Gastrocnemius medialis (tissue), 4 donors: ENCODE measurements at regions of chr20 and their contacts with region 1.

Region 1: GRCh38 chr20:10673988-10674711 is at the start of gene JAG1:
- DNase-seq: peak; percentile 91 to 93
- ATAC-seq: peak; percentile 79 to 80
- H3K4me3 ChIP-seq: peak within 1 kb of the TSS; percentile 62 to 98 (median 82)
- H3K27ac ChIP-seq: peak within 1 kb of the TSS; percentile 86 to 95 (median 88)
- H3K4me1 ChIP-seq: peaks cover 0 to 18% of the 10 kb centered on the region in 2 donors
- H3K27me3 ChIP-seq: no peaks in the 10 kb centered on the region
- CTCF ChIP-seq: no peak
- POLR2A ChIP-seq: peak in 1 of 2 donors; percentile 89
- total RNA-seq, gene JAG1: 10.3 to 19.6 (median 13.2) TPM

Region 2: DNA sequence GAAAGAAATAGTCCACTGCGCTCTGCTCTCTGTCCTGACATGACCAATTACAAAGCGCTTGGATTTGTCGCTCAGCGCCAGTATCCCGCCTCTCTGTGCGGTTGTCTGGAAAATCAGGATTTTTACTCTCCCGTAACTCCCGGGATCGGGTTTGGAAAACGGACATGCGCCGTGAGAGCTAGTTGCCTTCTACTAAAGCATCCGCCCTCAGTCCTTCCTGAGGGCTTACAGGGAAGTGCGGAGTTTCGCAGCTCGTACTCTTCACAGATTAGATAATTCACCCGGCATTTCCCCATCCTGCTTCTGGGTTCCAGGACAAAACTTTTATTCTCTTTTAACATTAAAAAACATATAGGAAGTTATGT is 239.7 kb before region 1 on chr20:
- in situ Hi-C with region 1: no loop called
- intact Hi-C with region 1: loop called (anchors 1 kb)
- DNase-seq: peak; percentile 94 to 95
- ATAC-seq: peak; percentile 87 to 94
- H3K4me3 ChIP-seq: peak overlapping the region; percentile 70 to 87 (median 80)
- H3K27ac ChIP-seq: peak overlapping the region; percentile 93 to 95 (median 93)
- H3K4me1 ChIP-seq: peaks cover 34 to 39% of the 10 kb centered on the region in 2 donors
- H3K27me3 ChIP-seq: no peaks in the 10 kb centered on the region
- CTCF ChIP-seq: no peak
- POLR2A ChIP-seq: peak; percentile 91 to 92

Region 3: DNA sequence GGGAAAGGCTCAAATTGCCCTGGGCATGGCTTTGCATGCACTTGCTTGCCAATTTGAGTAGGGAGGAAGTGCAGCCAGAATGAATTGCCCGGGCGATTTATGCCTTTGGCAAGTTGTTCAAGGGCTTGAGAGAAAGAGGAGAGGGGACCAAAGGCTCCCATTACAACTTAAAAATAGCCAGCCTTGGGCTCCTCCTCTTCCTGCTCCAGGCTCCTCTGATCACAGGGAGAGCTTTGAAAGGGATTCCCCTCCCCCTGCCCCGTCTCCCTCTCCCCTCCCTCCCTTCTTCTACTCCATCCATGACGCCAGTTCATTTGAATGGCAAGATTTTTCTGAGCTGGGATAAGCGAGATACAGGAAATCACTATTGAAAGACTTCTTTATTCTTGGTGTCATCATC is 304.6 kb after region 1 on chr20:
- in situ Hi-C with region 1: no loop called
- intact Hi-C with region 1: loop called (anchors 2 kb)
- DNase-seq: peak; percentile 69 to 87
- ATAC-seq: peak; percentile 89
- H3K4me3 ChIP-seq: peak overlapping the region in 2 of 4 donors; percentile 3 to 26
- H3K27ac ChIP-seq: peak overlapping the region; percentile 78 to 89 (median 87)
- H3K4me1 ChIP-seq: peaks cover 41 to 53% of the 10 kb centered on the region in 2 donors
- H3K27me3 ChIP-seq: no peaks in the 10 kb centered on the region
- CTCF ChIP-seq: no peak
- POLR2A ChIP-seq: no peak

Region 4: GRCh38 chr20:11204926-11205768 is 531.0 kb after region 1 on chr20:
- in situ Hi-C with region 1: loop called in 1 of 4 experiments (anchors 10 kb)
- intact Hi-C with region 1: loop called (anchors 2 kb)
- DNase-seq: peak; percentile 41 to 53
- ATAC-seq: peak; percentile 94 to 96
- H3K4me3 ChIP-seq: no peak overlapping the region
- H3K27ac ChIP-seq: peak overlapping the region in 3 of 4 donors; percentile 36 to 45 (median 36)
- H3K4me1 ChIP-seq: peaks cover 7 to 8% of the 10 kb centered on the region in 2 donors
- H3K27me3 ChIP-seq: no peaks in the 10 kb centered on the region
- CTCF ChIP-seq: peak; percentile 65 to 75 (median 70)
- POLR2A ChIP-seq: no peak

Region 5: GRCh38 chr20:11274141-11274594 is 600.0 kb after region 1 on chr20:
- in situ Hi-C with region 1: loop called in 1 of 4 experiments (anchors 10 kb)
- intact Hi-C with region 1: loop called (anchors 5 kb)
- DNase-seq: peak; percentile 14 to 18
- ATAC-seq: peak; percentile 85 to 95
- H3K4me3 ChIP-seq: no peak overlapping the region
- H3K27ac ChIP-seq: no peak overlapping the region
- H3K4me1 ChIP-seq: peaks cover 0 to 6% of the 10 kb centered on the region in 2 donors
- H3K27me3 ChIP-seq: no peaks in the 10 kb centered on the region
- CTCF ChIP-seq: peak; percentile 26 to 67 (median 44)
- POLR2A ChIP-seq: no peak

Region 6: DNA sequence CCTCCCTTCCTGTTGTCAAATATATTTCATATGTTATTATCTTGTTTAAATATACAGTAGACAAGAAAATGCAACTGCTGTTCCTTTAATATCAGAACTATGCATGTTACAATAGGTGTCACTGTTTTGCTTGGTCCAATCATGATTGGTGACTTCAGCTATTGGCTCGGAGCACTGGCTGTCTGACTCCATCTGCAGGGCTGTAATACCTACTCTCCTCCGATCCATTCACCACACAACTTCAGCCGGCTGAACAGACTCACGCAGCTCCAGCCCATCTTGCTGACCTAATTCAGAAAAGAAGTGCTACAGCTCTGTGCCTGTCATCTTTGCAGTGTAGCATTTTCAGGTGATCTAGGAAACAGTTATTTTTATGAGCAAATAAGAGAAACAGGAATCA is 1243.5 kb after region 1 on chr20 and contains the start of gene BTBD3:
- in situ Hi-C with region 1: loop called in 1 of 4 experiments (anchors 25 kb)
- intact Hi-C with region 1: no loop called
- DNase-seq: peak; percentile 19 to 45
- ATAC-seq: peak; percentile 94 to 95
- H3K4me3 ChIP-seq: peak within 1 kb of the TSS; percentile 38 to 47 (median 42)
- H3K27ac ChIP-seq: peak within 1 kb of the TSS; percentile 4 to 50 (median 36)
- H3K4me1 ChIP-seq: peaks cover 18 to 42% of the 10 kb centered on the region in 2 donors
- H3K27me3 ChIP-seq: no peaks in the 10 kb centered on the region
- CTCF ChIP-seq: no peak
- POLR2A ChIP-seq: peak in 1 of 2 donors; percentile 31
- total RNA-seq, gene BTBD3: 13.8 to 21.9 (median 14.8) TPM